AG04450 (cell line): ENCODE measurements at regions of chr11 and their contacts with region 1.

Region 1: DNA sequence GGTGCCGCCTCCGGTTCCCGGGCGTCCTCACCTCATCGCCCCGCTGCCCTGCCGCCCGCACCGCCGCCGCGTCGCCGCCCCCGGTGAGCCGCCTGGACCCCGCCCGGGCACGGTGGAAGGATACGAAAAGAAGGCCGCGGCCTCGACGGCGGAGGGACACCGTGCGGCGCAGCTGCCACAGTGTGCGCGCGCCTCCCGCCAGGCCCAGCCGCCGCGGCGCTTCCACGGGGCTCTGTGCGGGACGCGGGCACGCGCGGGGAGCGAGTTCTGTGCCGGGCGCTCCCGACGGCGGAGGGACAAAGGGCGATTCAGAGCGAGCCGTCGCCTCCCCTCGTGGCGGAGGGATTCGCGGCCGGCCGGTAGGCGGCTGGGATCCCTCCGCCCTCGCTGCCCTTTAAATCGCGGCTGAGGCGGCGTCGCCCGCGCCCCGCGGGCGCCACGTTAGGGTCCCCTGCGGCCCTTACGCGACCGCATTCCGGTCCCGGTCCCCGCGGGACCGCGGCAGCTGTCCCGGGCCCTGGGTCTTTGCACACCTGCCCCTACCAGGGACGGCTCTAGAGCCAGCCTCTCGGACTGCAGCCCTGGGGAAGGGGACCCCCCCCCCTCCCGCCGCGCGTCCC is 569 bp upstream of the KMT5B start:
- DNase-seq: peak; percentile 94
- H3K4me3 ChIP-seq: peak overlapping the region; percentile 69
- H3K27ac ChIP-seq: peak overlapping the region; percentile 78
- H3K27me3 ChIP-seq: peaks cover 16% of the 10 kb centered on the region
- CTCF ChIP-seq: no peak; the same call in 1 of the 2 replicates

Region 2: GRCh38 chr11:68198276-68198675 is 15.4 kb before region 1 on chr11:
- CTCF ChIA-PET with region 1: interaction called, 19 read pairs
- POLR2A ChIA-PET with region 1: no interaction called
- DNase-seq: no peak
- H3K4me3 ChIP-seq: no peak overlapping the region
- H3K27ac ChIP-seq: no peak overlapping the region
- H3K27me3 ChIP-seq: no peaks in the 10 kb centered on the region
- CTCF ChIP-seq: no peak

Region 3: GRCh38 chr11:68398995-68399851 is 185.6 kb after region 1 on chr11:
- CTCF ChIA-PET with region 1: no interaction called
- POLR2A ChIA-PET with region 1: no interaction called
- DNase-seq: no peak
- H3K4me3 ChIP-seq: no peak overlapping the region
- H3K27ac ChIP-seq: no peak overlapping the region
- H3K27me3 ChIP-seq: no peaks in the 10 kb centered on the region
- CTCF ChIP-seq: no peak